Right ventricle myocardium superior (tissue), 1 donor: ENCODE measurements at regions of chr5 and their contacts with region 1.

Region 1: GRCh38 chr5:174418928-174419796 is 305.2 kb upstream of the MSX2 start:
- DNase-seq: peak; percentile 91
- ATAC-seq: peak; percentile 99

Region 2: DNA sequence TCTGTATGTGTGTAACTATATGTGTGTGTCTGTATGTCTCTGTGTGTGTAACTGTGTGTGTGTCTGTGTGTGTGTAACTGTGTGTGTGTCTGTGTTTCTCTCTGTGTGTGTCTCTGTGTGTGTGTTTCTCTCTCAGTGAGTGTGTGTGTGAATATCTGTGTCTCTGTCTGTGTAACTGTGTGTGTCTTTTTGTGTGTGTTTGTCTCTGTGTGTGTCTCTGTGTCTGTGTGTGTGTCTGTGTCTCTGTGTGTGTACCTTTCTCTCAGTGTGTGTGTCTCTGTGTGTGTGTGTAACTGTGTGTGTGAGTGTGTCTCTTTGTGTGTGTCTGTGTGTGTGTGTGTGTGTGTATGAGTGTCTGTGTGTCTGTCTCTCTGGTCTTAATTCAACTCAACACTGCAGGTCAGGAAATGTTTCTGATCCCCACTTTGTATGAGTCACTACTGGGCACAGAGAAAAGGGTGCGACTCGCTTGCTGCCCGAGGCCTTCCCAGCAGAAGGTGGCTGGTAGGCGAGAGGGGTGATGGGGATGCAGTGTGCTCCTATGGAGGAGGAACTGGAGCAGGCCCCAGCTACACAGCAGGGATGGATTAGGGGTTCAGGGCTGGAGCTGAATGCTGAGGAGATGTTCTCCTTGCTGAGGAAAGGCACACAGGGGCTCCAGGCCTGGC is 321.5 kb before region 1 on chr5:
- intact Hi-C with region 1: no loop called
- DNase-seq: no peak
- ATAC-seq: no peak

Region 3: DNA sequence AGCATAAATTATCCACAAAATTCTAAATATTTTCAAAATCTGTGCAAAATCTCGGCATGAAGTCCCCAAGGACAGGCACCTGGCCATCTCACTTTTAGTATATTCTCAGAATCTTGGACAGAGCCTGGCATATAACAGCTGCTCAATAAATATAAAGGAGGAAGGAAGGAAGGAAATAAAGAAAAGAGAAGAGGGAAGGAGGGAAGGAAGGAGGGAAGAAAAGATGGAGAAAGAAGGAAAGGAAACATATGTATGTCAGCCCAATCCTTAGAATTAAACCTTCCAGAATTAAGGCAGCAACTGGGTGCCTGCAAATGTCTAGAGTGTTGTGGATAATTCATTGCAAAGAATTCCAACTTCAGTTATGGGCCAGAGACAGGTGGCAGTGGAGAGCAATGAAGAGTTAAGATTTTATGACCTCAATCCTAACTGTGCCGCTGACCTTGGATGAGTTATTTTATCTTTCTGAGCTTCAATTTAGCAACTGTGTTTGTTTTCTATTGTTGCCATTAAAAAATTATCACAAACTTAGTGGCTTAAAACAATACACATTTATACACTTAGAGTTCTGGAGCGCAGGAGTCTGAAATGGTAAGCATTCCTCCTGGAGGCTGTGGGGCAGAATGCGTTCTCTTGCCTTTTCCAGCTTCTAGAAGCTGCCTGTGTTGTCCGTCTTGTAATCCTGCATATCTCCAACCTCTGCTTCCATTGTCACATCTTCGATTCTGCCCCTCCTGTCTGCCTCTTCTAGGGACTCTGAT is 104.3 kb after region 1 on chr5:
- intact Hi-C with region 1: no loop called
- DNase-seq: no peak
- ATAC-seq: no peak

Region 4: GRCh38 chr5:174793684-174794328 is 374.6 kb after region 1 on chr5:
- intact Hi-C with region 1: loop called (anchors 2 kb)
- DNase-seq: peak; percentile 73
- ATAC-seq: peak; percentile 79

Region 5: DNA sequence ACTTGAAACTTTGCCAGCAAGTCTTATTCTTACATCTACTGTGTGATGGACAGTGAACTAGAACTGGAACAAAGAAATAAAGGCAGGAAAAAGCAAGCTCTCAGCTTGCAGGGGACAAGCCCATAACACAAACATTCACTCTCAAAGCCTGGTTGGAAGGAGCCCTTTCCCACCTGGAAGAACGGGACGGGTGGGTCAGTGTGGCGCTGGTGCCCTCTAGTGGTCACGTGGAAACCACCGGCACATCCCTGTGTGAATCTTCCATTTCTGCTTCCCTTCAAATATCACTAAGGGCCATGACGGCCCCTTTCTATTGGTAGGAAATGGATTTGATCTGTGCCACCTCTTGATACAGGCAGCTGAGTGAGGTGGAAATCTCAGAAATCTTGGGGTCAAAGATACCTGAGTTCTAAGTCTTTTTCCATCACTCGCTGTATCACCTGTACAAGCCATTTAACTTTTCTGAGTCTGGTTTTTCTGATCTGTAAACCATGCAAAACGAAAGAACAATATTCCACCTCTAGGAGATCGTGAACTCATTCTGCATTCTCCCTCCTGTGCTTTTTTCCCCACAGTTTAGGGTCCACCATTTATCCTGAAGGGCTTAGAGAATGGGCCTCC is 516.8 kb after region 1 on chr5:
- intact Hi-C with region 1: loop called (anchors 2 kb)
- DNase-seq: peak; percentile 61
- ATAC-seq: peak; percentile 75